ENCODE measurements at regions of chr2 and their contacts with region 1.

Region 1: DNA sequence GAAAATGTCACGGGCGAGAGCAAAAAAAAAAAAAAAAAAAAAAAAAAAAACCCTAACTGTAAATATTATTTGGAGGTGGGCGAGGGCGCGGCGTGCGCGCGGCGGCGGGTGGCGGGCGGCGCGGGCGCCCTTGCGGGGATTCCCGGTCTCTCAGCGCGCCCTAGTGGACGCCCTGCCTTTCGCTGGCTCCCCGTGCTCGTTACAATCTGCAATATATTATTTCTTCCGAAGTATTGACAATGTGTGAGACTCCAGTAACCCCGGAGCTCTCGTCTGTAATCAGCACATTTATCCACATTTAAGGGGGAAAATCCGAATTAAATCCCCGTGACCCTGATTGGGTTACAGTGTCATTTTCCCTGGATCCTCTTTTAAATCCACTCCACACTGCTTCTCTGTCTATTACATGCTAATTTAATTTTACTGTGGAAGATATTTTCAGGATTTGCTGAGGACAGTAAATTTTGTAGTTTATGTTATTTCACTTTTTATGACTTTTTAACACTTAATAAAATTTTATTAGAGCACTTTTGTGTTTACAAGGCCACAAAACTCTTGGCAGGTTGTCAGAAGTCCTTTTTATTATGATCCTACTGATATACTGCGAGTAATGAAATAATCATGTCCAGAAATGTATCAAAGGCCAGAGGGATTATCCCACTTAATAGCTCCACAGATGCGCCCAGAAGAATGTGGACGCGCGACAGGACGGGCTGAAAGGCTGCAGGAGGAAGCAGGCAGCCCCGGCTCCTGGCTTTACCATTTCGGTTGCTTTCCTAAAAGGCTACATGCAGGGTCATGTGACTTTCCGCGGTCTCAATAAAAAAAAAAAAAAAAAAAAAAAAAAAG is 369.1 kb downstream of the MTX2 start:
- DNase-seq: peak in 1 of 2 experiments; percentile 78
- H3K4me3 ChIP-seq: peak overlapping the region; percentile 37; the same call in 1 of the 2 replicates
- H3K27ac ChIP-seq: no peak overlapping the region
- H3K4me1 ChIP-seq: no peaks in the 10 kb centered on the region
- H3K27me3 ChIP-seq: no peaks in the 10 kb centered on the region; the same call in 1 of the 2 replicates
- CTCF ChIP-seq: peak; percentile 81

Region 2: DNA sequence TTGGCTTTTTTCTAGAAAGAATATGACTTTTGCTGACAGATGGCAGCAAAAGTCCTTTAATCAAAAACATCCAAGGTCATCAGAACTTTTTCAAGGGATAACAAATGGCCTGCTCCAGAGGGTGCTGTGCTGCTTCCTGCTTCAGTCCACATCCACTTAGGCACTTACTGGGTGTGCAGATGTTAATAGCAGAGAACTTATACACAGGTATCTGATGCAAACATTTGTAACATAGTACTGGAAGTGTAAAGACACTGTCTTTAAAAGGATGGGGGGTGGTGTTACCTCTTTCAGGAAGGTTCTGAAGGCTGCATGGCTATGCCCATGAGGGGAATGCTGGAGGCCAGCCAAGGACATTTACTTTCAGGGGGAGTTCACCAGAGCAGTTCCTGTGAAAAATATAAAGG is 503.4 kb before region 1 on chr2:
- CTCF ChIA-PET with region 1: interaction called, 6 read pairs
- POLR2A ChIA-PET with region 1: no interaction called
- intact Hi-C with region 1: loop called (anchors 2 kb)
- DNase-seq: no peak
- H3K4me3 ChIP-seq: no peak overlapping the region
- H3K27ac ChIP-seq: no peak overlapping the region
- H3K4me1 ChIP-seq: no peaks in the 10 kb centered on the region
- H3K27me3 ChIP-seq: peaks cover 21% of the 10 kb centered on the region
- CTCF ChIP-seq: no peak; the same call in 1 of the 2 replicates

Region 3: GRCh38 chr2:176554101-176555048 is 84.0 kb before region 1 on chr2:
- CTCF ChIA-PET with region 1: interaction called, 18 read pairs
- POLR2A ChIA-PET with region 1: no interaction called
- intact Hi-C with region 1: loop called (anchors 1 kb)
- DNase-seq: peak; percentile 53 to 54
- H3K4me3 ChIP-seq: peak overlapping the region; percentile 58
- H3K27ac ChIP-seq: no peak overlapping the region
- H3K4me1 ChIP-seq: no peaks in the 10 kb centered on the region
- H3K27me3 ChIP-seq: no peaks in the 10 kb centered on the region; the same call in 1 of the 2 replicates
- CTCF ChIP-seq: peak; percentile 100

Region 4: GRCh38 chr2:176582990-176583481 is 55.4 kb before region 1 on chr2:
- CTCF ChIA-PET with region 1: interaction called, 3 read pairs
- POLR2A ChIA-PET with region 1: no interaction called
- intact Hi-C with region 1: loop called (anchors 2 kb)
- DNase-seq: peak; percentile 79 to 93
- H3K4me3 ChIP-seq: peak overlapping the region; percentile 25; the same call in 1 of the 2 replicates
- H3K27ac ChIP-seq: peak overlapping the region; percentile 86
- H3K4me1 ChIP-seq: peaks cover 30% of the 10 kb centered on the region
- H3K27me3 ChIP-seq: no peaks in the 10 kb centered on the region
- CTCF ChIP-seq: no peak

Region 5: DNA sequence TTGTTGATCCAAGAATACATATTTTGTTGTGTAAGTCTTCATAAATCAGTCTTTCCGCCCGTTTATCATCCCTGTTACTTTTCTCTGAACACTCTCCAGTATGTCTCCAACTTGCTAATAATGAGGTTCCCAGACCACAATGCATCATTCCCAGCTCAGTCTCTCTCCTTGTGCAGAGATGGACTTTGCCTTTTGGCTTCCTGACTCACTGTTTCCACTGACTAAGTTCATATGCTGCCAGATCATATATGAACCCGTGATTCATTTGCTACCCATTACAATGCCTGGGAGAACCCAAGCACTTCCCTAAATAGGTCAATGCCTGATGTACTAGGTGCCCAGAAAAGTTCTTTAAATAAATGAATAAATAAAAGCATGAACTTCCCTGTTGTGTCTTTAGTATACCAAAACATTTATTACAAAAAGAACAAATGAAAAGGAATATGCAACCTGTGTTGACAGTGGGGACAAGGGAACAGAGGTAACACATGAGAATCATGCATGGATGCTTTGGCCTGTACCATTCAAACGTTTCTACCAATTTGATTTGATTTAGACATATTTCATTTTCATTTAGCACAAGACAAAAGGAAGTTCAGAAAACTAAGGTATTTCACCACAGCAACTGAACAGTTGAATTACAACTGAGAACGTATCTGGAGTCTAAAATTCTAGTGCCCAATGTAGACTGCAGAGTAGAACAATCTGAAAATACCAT is 358.8 kb after region 1 on chr2:
- CTCF ChIA-PET with region 1: no interaction called
- POLR2A ChIA-PET with region 1: no interaction called
- intact Hi-C with region 1: no loop called
- DNase-seq: no peak
- H3K4me3 ChIP-seq: no peak overlapping the region
- H3K27ac ChIP-seq: no peak overlapping the region
- H3K4me1 ChIP-seq: no peaks in the 10 kb centered on the region
- H3K27me3 ChIP-seq: no peaks in the 10 kb centered on the region; the same call in 1 of the 2 replicates
- CTCF ChIP-seq: no peak

Region 6: GRCh38 chr2:177044671-177045070 is 406.3 kb after region 1 on chr2:
- CTCF ChIA-PET with region 1: interaction called, 12 read pairs
- POLR2A ChIA-PET with region 1: no interaction called
- intact Hi-C with region 1: no loop called
- DNase-seq: no peak
- H3K4me3 ChIP-seq: no peak overlapping the region
- H3K27ac ChIP-seq: no peak overlapping the region
- H3K4me1 ChIP-seq: no peaks in the 10 kb centered on the region
- H3K27me3 ChIP-seq: peaks cover 74% of the 10 kb centered on the region
- CTCF ChIP-seq: no peak

Region 7: GRCh38 chr2:177078416-177078815 is 440.0 kb after region 1 on chr2:
- CTCF ChIA-PET with region 1: no interaction called
- POLR2A ChIA-PET with region 1: no interaction called
- intact Hi-C with region 1: no loop called
- DNase-seq: no peak
- H3K4me3 ChIP-seq: no peak overlapping the region
- H3K27ac ChIP-seq: no peak overlapping the region
- H3K4me1 ChIP-seq: no peaks in the 10 kb centered on the region
- H3K27me3 ChIP-seq: no peaks in the 10 kb centered on the region
- CTCF ChIP-seq: no peak

Measured in PC-9 (cell line).